Lower leg skin (tissue), 4 donors: ENCODE measurements at regions of chr1 and their contacts with region 1.

Region 1: GRCh38 chr1:205530116-205530515 is 25.6 kb downstream of the CDK18 start:
- DNase-seq: no peak
- H3K4me3 ChIP-seq: no peak overlapping the region
- CTCF ChIP-seq: no peak
- POLR2A ChIP-seq: no peak

Region 2: DNA sequence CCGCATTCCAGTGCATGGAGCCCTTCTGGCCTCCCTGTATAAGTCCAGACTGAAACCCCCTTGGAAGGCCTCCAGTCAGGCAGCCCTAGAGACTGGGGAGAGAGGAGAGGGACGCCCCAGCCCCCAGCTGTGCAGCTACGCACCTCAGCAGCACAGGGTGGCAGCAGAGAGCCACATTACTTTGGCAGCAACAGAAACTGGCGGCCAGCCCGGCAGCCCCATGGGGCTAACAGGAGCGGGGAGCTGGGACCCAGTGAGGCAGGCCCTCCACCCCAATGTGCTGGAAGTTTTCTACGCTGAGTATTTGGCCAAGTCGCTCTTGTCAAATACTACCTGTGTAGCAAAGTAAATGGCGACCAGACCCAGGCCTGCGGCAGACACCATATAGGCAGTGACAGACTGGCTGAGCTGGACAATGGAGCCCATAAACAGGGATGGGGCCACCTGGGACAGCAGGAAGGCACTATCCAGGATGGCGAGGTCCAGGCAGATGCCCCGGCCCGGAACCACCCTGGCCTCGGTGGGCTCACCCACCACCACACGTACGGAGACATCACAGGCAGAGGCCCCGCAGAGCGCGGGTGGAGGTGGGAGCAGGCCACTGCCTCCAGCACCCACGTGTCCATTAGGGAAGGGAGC is 128.9 kb after region 1 on chr1:
- intact Hi-C with region 1: loop called (anchors 2 kb)
- DNase-seq: peak; percentile 71 to 94
- H3K4me3 ChIP-seq: no peak overlapping the region
- CTCF ChIP-seq: peak in 1 of 3 donors; percentile 78
- POLR2A ChIP-seq: no peak

Region 3: GRCh38 chr1:205812878-205813754 is 283.0 kb after region 1 on chr1 and contains the start of gene SLC41A1:
- intact Hi-C with region 1: no loop called
- DNase-seq: peak; percentile 93 to 99
- H3K4me3 ChIP-seq: peak within 1 kb of the TSS; percentile 71
- CTCF ChIP-seq: no peak
- POLR2A ChIP-seq: peak in 1 of 2 donors; percentile 9
- total RNA-seq, gene SLC41A1: 12.8 to 22.0 (median 15.8) TPM